ENCODE measurements at regions of chr1 and their contacts with region 1.

Region 1: DNA sequence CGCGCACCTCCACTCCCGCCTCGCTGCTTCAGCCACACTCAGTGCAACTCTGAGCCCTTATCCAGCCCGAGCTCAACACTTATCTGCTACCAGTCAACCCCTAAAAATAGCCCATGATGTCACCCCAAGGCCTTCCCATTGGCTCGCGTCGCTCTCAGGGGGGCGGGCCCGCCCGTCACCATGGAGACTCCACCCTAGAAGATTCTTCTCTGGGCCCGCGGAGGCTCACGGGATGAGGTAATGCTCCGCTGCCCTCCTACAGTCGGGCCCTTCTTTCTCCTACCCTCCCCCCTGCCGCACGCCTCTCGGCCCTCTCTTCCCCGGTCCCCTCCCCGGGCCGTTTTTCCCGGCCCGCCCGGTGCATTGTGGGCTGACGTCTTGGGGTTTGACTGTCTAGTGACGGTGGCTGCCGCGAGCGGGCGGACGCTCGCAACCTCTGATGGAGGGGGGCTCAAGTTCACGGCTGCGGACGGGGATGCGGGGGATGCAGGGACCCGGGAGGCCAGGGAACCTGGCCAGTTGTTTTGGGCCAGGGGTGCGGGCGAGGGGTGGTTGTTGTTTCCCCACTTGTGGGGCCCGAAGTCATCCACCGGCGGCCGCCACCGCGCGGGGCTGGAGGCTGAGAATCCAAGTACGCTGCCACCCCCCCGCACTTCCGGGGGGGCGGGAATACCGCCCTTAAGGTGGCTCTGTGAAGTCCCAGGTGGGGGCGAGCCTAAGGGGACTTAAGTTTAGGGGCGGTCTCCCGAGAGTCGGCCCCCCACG is at the start of gene JUN:
- DNase-seq: peak; percentile 100
- H3K4me3 ChIP-seq: peak within 1 kb of the TSS; percentile 95 to 98
- H3K27ac ChIP-seq: peak within 1 kb of the TSS; percentile 100
- H3K4me1 ChIP-seq: peaks cover 37% of the 10 kb centered on the region
- H3K27me3 ChIP-seq: no peaks in the 10 kb centered on the region
- CTCF ChIP-seq: no peak
- POLR2A ChIP-seq: peak in 1 of 2 donors; percentile 100
- total RNA-seq, gene JUN: 275 TPM

Region 2: GRCh38 chr1:57424231-57425027 is 1359.7 kb before region 1 on chr1:
- intact Hi-C with region 1: no loop called
- DNase-seq: no peak
- H3K4me3 ChIP-seq: peak overlapping the region; percentile 26 to 37
- H3K27ac ChIP-seq: no peak overlapping the region
- H3K4me1 ChIP-seq: peaks cover 27% of the 10 kb centered on the region
- H3K27me3 ChIP-seq: peaks cover 8% of the 10 kb centered on the region
- CTCF ChIP-seq: no peak
- POLR2A ChIP-seq: no peak

Region 3: GRCh38 chr1:58592529-58593134 is 191.5 kb before region 1 on chr1:
- intact Hi-C with region 1: no loop called
- DNase-seq: no peak
- H3K4me3 ChIP-seq: no peak overlapping the region
- H3K27ac ChIP-seq: peak overlapping the region; percentile 46
- H3K4me1 ChIP-seq: peaks cover 24% of the 10 kb centered on the region
- H3K27me3 ChIP-seq: no peaks in the 10 kb centered on the region
- CTCF ChIP-seq: no peak
- POLR2A ChIP-seq: no peak

Region 4: GRCh38 chr1:58816072-58816746 is 32.0 kb after region 1 on chr1:
- intact Hi-C with region 1: loop called (anchors 1 kb)
- DNase-seq: no peak
- H3K4me3 ChIP-seq: peak overlapping the region; percentile 57 to 68
- H3K27ac ChIP-seq: peak overlapping the region; percentile 88
- H3K4me1 ChIP-seq: peaks cover 54% of the 10 kb centered on the region
- H3K27me3 ChIP-seq: no peaks in the 10 kb centered on the region
- CTCF ChIP-seq: no peak
- POLR2A ChIP-seq: no peak

Region 5: GRCh38 chr1:58903514-58904298 is 119.5 kb after region 1 on chr1:
- intact Hi-C with region 1: loop called (anchors 5 kb)
- DNase-seq: no peak
- H3K4me3 ChIP-seq: peak overlapping the region; percentile 43 to 63
- H3K27ac ChIP-seq: peak overlapping the region; percentile 93
- H3K4me1 ChIP-seq: peaks cover 11% of the 10 kb centered on the region
- H3K27me3 ChIP-seq: no peaks in the 10 kb centered on the region
- CTCF ChIP-seq: no peak
- POLR2A ChIP-seq: peak in 1 of 2 donors; percentile 81

Region 6: GRCh38 chr1:59057211-59057694 is 273.1 kb after region 1 on chr1:
- intact Hi-C with region 1: loop called (anchors 10 kb)
- DNase-seq: peak in 1 of 2 donors; percentile 95
- H3K4me3 ChIP-seq: peak overlapping the region in 1 of 2 donors; percentile 3
- H3K27ac ChIP-seq: peak overlapping the region; percentile 74
- H3K4me1 ChIP-seq: peaks cover 52% of the 10 kb centered on the region
- H3K27me3 ChIP-seq: no peaks in the 10 kb centered on the region
- CTCF ChIP-seq: no peak
- POLR2A ChIP-seq: no peak

Region 7: DNA sequence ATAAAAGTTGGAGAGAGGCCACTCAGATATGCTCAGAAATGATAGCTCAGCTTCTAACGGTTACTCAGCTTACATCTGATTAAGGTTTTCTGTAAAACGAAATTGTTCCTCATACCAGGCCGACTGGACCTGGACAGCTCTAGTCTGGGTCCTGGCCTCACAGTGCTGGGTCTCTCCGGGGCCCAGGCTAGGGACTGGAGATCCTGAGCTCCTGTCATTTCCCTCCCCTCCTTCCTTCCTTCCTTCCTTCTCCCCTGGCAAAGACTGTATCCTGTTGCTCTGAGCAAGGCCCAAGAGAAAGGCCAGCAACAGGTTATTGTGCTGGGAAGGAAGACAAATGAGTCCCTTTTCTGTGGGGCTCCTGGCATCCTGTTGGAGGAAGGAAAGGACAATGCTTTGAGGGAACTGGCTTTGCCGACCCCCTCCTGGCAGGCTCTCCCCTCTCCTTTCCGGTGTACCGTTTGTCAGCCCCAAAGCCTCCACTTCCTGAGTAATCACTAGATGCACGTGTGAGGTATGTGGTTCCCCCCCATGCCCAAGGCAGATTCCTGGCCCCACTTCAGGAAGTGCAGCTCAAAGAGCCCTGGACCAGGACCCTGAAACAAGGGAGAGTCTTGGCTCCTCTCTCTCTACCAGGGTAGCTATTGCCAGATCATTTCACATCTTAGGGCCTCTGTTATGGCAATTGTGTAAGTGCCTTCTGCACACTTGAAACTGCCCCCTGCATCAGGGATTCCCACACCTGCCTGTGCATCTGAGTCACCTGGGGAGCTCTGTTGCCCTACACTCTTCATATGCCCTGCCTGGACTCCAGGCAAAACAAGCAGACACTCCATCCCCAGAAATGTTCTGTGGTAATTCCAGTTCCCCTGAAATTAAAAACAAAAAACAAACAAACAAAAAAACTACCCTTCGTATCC is 300.0 kb after region 1 on chr1:
- intact Hi-C with region 1: no loop called
- DNase-seq: no peak
- H3K4me3 ChIP-seq: no peak overlapping the region
- H3K27ac ChIP-seq: no peak overlapping the region
- H3K4me1 ChIP-seq: peaks cover 13% of the 10 kb centered on the region
- H3K27me3 ChIP-seq: no peaks in the 10 kb centered on the region
- CTCF ChIP-seq: no peak
- POLR2A ChIP-seq: no peak

Region 8: DNA sequence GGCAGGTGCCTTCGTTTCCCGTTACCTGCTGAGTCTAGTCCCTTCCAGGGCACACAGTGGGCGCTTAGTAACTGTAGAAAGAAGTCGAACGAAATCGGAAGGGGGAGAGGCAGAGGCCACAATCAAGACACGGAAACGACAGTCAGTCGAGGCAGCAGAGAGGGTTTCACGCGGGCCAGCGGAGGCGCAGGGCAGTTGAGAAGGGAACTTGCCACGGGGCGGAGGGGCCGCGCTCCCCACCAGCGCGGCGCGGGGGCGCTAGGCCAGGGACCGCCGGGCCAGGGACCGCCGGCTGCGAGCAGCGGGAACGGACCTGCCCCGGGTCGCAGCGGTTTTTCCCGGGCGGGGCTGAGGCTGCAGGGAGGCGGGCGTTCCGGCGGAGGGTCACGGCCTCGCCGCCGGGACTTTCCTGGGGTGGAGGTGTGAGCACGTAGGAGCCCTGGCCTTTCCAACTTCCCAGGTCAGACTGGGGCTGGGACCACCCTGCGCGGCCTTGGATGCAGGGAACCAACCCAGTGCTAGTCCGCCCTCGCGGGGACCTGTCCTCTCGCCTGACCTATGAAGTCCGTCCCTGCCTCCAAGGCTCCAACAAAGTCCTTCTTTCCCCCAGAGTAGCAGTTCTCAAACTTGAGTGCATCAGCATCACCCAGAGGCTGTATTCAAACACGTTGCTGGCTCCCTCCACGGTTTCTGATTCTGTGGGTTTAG is 362.6 kb after region 1 on chr1:
- intact Hi-C with region 1: loop called (anchors 10 kb)
- DNase-seq: no peak
- H3K4me3 ChIP-seq: peak overlapping the region; percentile 43 to 62
- H3K27ac ChIP-seq: peak overlapping the region; percentile 60
- H3K4me1 ChIP-seq: peaks cover 29% of the 10 kb centered on the region
- H3K27me3 ChIP-seq: no peaks in the 10 kb centered on the region
- CTCF ChIP-seq: no peak
- POLR2A ChIP-seq: no peak

Region 9: DNA sequence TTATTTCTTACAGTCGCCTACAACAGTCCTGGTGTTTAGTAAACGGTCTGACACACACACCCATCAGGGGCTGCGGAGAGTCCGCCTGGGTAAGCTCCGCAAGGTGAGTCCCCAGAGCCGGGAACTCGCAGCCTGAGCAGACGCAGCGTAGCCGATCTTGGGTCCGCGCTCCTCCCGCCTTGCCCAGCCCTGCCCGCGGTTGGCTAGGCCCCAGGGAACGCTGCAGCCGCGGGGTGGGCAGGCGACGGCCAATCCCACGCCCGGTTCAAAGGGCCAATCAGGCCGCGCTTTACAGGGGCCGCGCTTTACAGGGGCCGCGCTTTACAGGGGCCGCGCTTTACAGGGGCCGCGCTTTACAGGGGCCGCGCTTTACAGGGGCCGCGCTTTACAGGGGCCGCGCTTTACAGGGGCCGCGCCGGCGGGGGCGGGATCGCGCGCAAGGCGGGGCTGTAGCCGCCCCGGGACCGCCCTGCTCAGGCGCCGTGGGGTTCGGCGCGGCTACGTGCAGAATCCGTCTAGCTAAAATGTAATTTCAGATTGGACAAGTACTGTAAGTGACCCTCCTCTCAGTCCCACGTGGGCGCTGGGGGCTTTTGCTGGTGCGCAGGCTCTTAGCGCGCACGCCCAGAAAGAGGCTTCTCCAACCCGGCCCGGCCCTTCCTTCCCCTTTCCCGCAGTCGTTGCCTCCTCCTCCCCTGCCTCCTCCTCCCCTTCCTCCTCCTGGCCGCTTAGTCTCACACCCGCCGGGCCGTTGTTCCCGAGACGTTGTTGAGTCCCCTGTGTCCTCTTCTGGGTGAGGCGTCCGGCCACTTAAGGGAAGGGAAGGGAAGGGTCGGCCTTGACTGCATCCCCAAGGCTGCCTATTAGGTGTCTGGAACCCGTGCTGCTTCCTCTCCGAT is 512.4 kb after region 1 on chr1 and contains the start of gene FGGY:
- intact Hi-C with region 1: loop called (anchors 2 kb)
- DNase-seq: peak in 1 of 2 donors; percentile 98
- H3K4me3 ChIP-seq: peak within 1 kb of the TSS; percentile 55 to 64
- H3K27ac ChIP-seq: peak within 1 kb of the TSS; percentile 97
- H3K4me1 ChIP-seq: peaks cover 31% of the 10 kb centered on the region
- H3K27me3 ChIP-seq: no peaks in the 10 kb centered on the region
- CTCF ChIP-seq: no peak
- POLR2A ChIP-seq: peak in 1 of 2 donors; percentile 72
- total RNA-seq, gene FGGY: 11.8 TPM

Region 10: GRCh38 chr1:59707178-59707791 is 923.1 kb after region 1 on chr1:
- intact Hi-C with region 1: loop called (anchors 5 kb)
- DNase-seq: no peak
- H3K4me3 ChIP-seq: no peak overlapping the region
- H3K27ac ChIP-seq: peak overlapping the region; percentile 82
- H3K4me1 ChIP-seq: peaks cover 49% of the 10 kb centered on the region
- H3K27me3 ChIP-seq: no peaks in the 10 kb centered on the region
- CTCF ChIP-seq: no peak
- POLR2A ChIP-seq: no peak

Measured in vagina (tissue), 2 donors.